Body of pancreas (tissue), 4 donors: ENCODE measurements at regions of chr2 and their contacts with region 1.

Region 1: DNA sequence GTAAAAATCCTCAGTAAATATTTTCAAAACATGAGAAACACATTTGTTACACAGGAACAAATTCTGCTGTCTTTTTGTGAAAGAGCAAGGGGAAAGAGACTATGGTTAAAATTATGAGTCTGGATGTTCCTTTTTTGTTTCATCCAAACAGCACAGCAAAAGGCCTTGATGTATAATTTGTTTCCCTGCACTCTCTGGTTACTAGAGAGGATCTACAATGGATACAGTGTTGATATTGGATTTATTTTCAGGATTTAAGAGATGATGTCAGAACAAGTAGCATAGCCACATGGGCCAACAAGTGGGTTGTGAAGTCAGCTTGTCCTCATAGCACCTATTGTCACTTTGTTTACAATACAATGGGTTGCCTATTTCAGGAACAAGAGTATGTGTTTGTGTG is 11.3 kb upstream of the ERBB4 start:
- DNase-seq: no peak
- ATAC-seq: no peak
- H3K4me3 ChIP-seq: no peak overlapping the region
- H3K27ac ChIP-seq: no peak overlapping the region
- H3K4me1 ChIP-seq: peaks cover 9% of the 10 kb centered on the region
- H3K27me3 ChIP-seq: no peaks in the 10 kb centered on the region
- CTCF ChIP-seq: no peak
- POLR2A ChIP-seq: no peak

Region 2: DNA sequence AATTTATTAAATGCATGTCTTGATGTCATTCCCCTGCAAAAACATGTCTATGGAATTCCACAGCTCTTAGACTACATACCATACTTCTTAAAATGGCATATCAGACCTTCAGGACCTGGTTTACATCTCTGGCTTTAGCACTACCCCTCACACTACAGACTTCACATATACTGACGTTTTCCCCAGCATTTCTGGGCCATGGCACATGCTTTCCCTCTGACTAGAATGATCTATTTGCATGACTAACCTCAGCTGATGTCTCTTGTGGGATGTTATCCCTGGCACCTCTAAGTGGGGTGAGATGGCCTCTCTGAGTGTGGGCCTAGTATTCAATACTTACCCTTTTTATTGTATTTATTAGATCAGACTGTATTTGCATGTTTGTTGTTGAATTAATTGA is 392.9 kb before region 1 on chr2:
- intact Hi-C with region 1: loop called (anchors 10 kb)
- DNase-seq: no peak
- ATAC-seq: no peak
- H3K4me3 ChIP-seq: no peak overlapping the region
- H3K27ac ChIP-seq: no peak overlapping the region
- H3K4me1 ChIP-seq: no peaks in the 10 kb centered on the region
- H3K27me3 ChIP-seq: no peaks in the 10 kb centered on the region
- CTCF ChIP-seq: no peak
- POLR2A ChIP-seq: no peak